ENCODE measurements at regions of chr18 and their contacts with region 1.

Region 1: GRCh38 chr18:2655178-2655953 is at the start of gene SMCHD1:
- DNase-seq: peak; percentile 93
- H3K4me3 Mint-ChIP-seq: peak within 1 kb of the TSS; percentile 93
- H3K27ac Mint-ChIP-seq: peak within 1 kb of the TSS; percentile 96
- H3K4me1 Mint-ChIP-seq: peaks cover 34% of the 10 kb centered on the region
- H3K27me3 Mint-ChIP-seq: no peaks in the 10 kb centered on the region
- total RNA-seq, gene SMCHD1: 91.3 to 91.5 TPM

Region 2: GRCh38 chr18:2354292-2354691 is 301.1 kb before region 1 on chr18:
- CTCF ChIA-PET with region 1: no interaction called
- intact Hi-C with region 1: no loop called
- DNase-seq: no peak
- H3K4me3 Mint-ChIP-seq: no peak overlapping the region
- H3K27ac Mint-ChIP-seq: no peak overlapping the region
- H3K4me1 Mint-ChIP-seq: no peaks in the 10 kb centered on the region
- H3K27me3 Mint-ChIP-seq: peaks cover 3% of the 10 kb centered on the region

Region 3: DNA sequence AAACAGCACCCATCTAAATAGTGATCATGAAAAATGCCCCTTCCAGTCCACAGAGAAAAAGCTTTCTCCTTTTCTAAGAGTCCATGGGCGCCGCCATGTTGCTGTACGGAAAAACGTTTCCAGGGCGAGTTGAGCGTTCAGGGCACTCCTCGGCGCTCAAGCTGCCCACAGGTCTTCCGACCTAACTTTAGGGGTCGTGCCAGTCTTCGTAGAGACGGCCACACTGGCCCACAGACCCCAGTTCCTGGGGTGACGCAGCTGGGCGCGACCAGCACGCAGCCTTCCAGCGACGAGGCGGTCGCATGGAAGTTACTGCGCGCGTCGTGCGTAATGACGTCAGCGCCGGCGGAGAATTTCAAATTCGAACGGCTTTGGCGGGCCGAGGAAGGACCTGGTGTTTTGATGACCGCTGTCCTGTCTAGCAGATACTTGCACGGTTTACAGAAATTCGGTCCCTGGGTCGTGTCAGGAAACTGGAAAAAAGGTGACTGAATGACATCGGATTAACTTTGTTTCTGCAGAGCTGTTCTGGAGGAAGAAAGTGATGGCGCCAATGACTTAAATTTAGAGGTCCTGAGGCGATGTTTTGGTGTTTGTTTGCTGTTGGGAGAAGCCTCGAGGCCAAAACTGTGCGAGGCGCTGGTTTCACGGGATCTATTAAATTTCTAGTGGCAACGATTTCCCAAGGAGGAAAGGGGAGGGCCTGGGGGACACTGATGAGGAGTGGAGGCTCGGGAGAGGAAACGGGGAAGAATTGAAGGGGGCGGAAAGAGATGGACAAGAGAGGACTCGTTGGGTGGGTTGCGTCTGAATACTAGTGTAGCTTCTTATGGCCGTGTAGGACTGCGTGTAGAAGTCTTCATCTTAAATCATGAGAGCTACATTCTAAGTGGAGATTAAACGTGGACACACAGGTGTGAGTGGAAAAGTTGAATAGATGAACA is 83.9 kb before region 1 on chr18 and contains the starts of genes METTL4 and NDC80:
- CTCF ChIA-PET with region 1: no interaction called
- intact Hi-C with region 1: loop called (anchors 1 kb)
- DNase-seq: peak; percentile 90
- H3K4me3 Mint-ChIP-seq: peak within 1 kb of the TSS; percentile 97
- H3K27ac Mint-ChIP-seq: peak within 1 kb of the TSS; percentile 98
- H3K4me1 Mint-ChIP-seq: peaks cover 49% of the 10 kb centered on the region
- H3K27me3 Mint-ChIP-seq: no peaks in the 10 kb centered on the region
- total RNA-seq, gene METTL4: 19.4 to 20.6 TPM
- total RNA-seq, gene NDC80: 96.8 to 108 TPM

Region 4: DNA sequence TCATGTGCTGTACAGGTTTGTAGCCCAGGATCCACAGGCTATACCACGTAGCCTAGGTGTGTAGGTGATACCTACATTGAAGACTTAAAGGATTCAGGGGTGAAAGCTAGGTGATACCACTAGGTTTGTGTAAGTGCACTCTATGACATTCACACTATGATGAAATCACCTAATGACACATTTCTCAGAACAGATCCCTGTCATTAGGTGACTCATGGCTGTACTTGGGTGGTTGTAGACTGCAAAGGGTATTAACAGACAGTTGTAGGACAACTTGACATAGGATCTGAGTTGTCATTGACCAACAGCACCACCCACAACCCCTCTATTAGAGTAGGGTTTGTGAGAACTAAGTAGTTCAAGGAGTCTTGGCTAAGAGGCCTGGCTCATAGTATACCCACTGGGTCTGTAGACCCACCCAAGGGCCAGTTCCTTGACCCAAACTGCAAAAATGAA is 27.5 kb before region 1 on chr18:
- CTCF ChIA-PET with region 1: no interaction called
- intact Hi-C with region 1: loop called (anchors 2 kb)
- DNase-seq: peak; percentile 66
- H3K4me3 Mint-ChIP-seq: no peak overlapping the region
- H3K27ac Mint-ChIP-seq: peak overlapping the region; percentile 50
- H3K4me1 Mint-ChIP-seq: peaks cover 30% of the 10 kb centered on the region
- H3K27me3 Mint-ChIP-seq: no peaks in the 10 kb centered on the region

Region 5: GRCh38 chr18:2681993-2682603 is 26.7 kb after region 1 on chr18:
- CTCF ChIA-PET with region 1: no interaction called
- intact Hi-C with region 1: loop called (anchors 1 kb)
- DNase-seq: no peak
- H3K4me3 Mint-ChIP-seq: no peak overlapping the region
- H3K27ac Mint-ChIP-seq: peak overlapping the region; percentile 86
- H3K4me1 Mint-ChIP-seq: peaks cover 55% of the 10 kb centered on the region
- H3K27me3 Mint-ChIP-seq: no peaks in the 10 kb centered on the region

Region 6: DNA sequence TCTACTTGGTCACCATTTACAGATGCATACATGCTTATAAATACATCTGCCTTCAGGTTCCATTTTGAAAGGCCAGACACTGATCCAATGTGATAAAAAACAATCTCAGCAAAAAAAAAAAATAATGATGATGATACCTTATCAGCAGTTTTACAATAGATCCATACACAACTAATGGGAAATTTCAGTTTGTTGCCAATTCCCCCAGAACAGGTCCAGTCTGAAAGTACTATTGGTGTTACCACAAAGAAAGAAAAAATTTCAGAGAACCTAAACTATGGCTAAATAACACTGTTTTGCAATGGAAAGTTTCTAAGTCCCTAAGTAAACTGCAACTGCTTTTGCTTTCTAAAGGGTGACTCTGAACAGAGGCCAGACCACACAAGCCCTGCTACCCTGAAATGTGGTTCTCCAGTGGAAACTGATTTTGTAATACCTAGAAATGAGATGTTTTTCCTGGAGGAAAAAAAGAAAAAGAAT is 303.5 kb after region 1 on chr18:
- CTCF ChIA-PET with region 1: no interaction called
- intact Hi-C with region 1: loop called (anchors 1 kb)
- DNase-seq: peak; percentile 44
- H3K4me3 Mint-ChIP-seq: peak overlapping the region; percentile 53
- H3K27ac Mint-ChIP-seq: peak overlapping the region; percentile 100
- H3K4me1 Mint-ChIP-seq: peaks cover 88% of the 10 kb centered on the region
- H3K27me3 Mint-ChIP-seq: no peaks in the 10 kb centered on the region

Region 7: GRCh38 chr18:3722320-3723000 is 1067.1 kb after region 1 on chr18:
- CTCF ChIA-PET with region 1: no interaction called
- intact Hi-C with region 1: no loop called
- DNase-seq: no peak
- H3K4me3 Mint-ChIP-seq: no peak overlapping the region
- H3K27ac Mint-ChIP-seq: no peak overlapping the region
- H3K4me1 Mint-ChIP-seq: no peaks in the 10 kb centered on the region
- H3K27me3 Mint-ChIP-seq: peaks cover 25% of the 10 kb centered on the region

Measured in activated naive CD4-positive, alpha-beta T cell treated with anti-CD3 and anti-CD28 coated beads for 36 hours (primary cell).